Astrocyte of the spinal cord (primary cell): ENCODE measurements at regions of chr14 and their contacts with region 1.

Region 1: GRCh38 chr14:100662879-100663760 is 63.6 kb upstream of the DLK1 start:
- DNase-seq: peak; percentile 64
- H3K4me3 ChIP-seq: no peak overlapping the region
- CTCF ChIP-seq: peak; percentile 84

Region 2: DNA sequence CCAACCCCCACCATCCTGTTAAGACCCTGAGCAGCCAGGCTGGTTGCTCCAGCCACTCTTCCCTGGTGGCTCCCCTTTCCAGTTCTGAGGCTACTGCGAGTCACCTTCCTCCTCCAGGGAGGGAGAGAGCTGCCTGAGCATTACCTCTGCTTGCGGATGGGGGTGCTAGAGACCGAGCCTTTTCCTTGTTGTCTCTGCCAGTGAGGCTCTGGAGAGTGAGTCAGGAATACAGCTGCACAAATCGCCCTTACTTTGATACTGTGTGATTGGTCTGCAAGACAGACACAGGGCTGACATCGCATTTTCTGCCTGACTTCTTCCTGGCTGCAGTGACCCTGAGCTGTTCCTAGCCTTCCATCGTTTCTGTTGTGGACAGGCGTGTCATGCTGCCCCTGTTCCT is 245.7 kb before region 1 on chr14:
- in situ Hi-C with region 1: loop called (anchors 25 kb)
- DNase-seq: peak; percentile 94
- H3K4me3 ChIP-seq: no peak overlapping the region
- CTCF ChIP-seq: peak; percentile 97

Region 3: DNA sequence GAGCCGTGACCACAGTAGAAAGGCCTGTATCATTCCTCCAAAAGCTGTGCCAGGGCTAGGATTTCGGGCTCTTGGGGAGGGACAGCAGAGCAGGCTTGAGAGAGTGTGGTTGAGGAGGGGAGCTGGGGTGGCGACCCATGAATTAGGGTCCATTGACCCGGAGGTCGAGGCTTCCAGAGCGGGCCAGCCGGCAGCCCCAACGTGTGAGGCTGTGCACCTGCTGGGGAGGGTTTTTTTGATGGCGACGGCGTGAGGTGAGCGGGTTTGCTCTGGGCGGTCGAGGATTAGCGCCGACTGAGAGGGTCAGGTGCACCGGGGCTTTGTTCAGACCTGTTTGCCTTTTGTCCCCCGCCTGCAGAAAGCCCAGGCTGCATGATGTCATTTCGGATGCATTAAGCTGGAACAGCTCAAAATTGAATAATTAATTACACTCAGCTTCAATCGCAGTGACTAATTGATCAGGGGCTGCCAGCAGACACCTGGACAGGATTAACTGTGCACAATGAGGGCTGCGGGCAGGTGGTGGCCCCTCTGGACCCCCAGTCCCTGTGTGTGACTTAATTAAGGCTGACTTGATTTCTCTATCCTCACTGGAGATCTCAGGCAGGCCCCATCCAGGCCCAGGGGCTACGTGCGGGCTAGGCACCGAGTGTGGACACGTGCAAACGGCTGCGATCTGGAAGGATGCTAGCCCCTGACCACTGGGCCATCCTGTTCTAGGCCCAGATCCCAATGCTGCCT is 120.7 kb after region 1 on chr14:
- in situ Hi-C with region 1: no loop called
- DNase-seq: no peak
- H3K4me3 ChIP-seq: no peak overlapping the region
- CTCF ChIP-seq: no peak